A549 (cell line): ENCODE measurements at regions of chr10 and their contacts with region 1.

Region 1: GRCh38 chr10:118241229-118242137 is 100.6 kb downstream of the FAM204A start:
- DNase-seq: peak; percentile 31 to 78
- ATAC-seq: peak; percentile 51 to 88; a peak in 3 of 6 replicates
- H3K4me3 ChIP-seq: no peak overlapping the region
- H3K27ac ChIP-seq: no peak overlapping the region
- H3K4me1 ChIP-seq: no peaks in the 10 kb centered on the region
- CTCF ChIP-seq: peak; percentile 92
- EP300 ChIP-seq: no peak
- POLR2A ChIP-seq: no peak
- RAD21 ChIP-seq: peak; percentile 92 to 93

Region 2: GRCh38 chr10:117537436-117537903 is 704.0 kb before region 1 on chr10:
- CTCF ChIA-PET with region 1: interaction called, 51 read pairs
- POLR2A ChIA-PET with region 1: no interaction called
- DNase-seq: peak; percentile 25 to 50
- ATAC-seq: peak; percentile 45 to 74; a peak in 4 of 6 replicates
- H3K4me3 ChIP-seq: no peak overlapping the region
- H3K27ac ChIP-seq: no peak overlapping the region
- H3K4me1 ChIP-seq: 0 out of 3 replicates have a peak, but pooled peaks cover 12% of the 10 kb centered on the region
- CTCF ChIP-seq: peak; percentile 95
- EP300 ChIP-seq: no peak
- POLR2A ChIP-seq: no peak
- RAD21 ChIP-seq: peak; percentile 69 to 94

Region 3: DNA sequence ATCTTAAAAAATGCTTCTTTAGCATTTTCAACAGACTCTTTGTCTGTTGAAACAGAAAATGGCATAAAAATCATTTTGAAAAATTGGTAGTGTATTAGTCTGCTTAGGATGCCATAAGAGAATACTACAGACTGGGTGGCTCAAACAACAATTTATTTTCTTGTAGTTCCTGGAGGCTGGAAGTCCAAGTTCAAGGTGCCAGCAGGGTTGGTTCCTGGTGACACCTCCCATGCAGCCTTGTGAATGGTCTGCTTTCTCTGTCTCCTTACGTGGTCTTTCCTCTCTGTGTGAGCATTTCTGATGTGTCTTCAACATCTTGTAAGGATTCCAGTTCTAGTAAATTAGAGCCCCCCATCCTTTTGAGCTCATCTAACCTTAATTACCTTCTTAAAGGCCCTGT is 168.6 kb before region 1 on chr10:
- CTCF ChIA-PET with region 1: no interaction called
- POLR2A ChIA-PET with region 1: no interaction called
- DNase-seq: no peak
- ATAC-seq: no peak
- H3K4me3 ChIP-seq: no peak overlapping the region
- H3K27ac ChIP-seq: no peak overlapping the region
- H3K4me1 ChIP-seq: no peaks in the 10 kb centered on the region
- CTCF ChIP-seq: no peak
- EP300 ChIP-seq: no peak
- POLR2A ChIP-seq: no peak
- RAD21 ChIP-seq: no peak

Region 4: DNA sequence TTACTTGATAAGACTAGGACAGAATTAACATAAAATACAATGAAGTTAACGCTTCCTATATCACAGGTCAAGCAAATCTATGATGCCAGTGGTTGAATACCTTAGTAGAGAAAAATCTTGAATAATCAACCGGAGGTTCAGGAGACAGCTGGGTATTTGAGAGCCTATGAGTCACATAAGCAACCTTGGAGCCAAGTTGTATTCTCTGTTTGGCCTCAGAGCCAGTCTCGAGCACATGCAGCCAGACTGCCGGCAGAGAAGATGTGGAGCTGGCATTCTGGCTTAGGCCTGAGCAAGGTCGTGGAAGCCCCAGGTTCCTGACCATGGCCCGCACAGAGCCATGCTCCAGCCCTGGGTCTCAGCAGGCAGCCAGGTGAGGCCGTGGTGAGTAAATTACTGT is 10.3 kb after region 1 on chr10:
- CTCF ChIA-PET with region 1: interaction called, 15 read pairs
- POLR2A ChIA-PET with region 1: no interaction called
- DNase-seq: no peak
- ATAC-seq: no peak
- H3K4me3 ChIP-seq: no peak overlapping the region
- H3K27ac ChIP-seq: no peak overlapping the region
- H3K4me1 ChIP-seq: no peaks in the 10 kb centered on the region
- CTCF ChIP-seq: no peak
- EP300 ChIP-seq: no peak
- POLR2A ChIP-seq: no peak
- RAD21 ChIP-seq: no peak